ENCODE measurements at regions of chr15 and their contacts with region 1.

Region 1: DNA sequence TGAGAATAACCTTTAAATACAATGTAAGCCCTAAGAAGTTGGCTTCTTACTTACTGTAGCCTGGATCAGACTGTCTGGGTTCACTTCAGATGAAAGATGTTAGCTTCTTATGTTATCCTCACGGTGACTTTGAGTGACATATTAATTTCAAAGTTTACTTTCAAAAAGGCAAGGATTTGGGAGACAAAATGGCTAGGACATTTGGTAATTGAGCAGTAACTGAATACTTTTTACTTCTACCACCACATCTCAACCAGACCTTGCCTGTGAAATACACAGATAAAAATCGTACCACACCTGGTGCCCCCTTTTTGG is 36.0 kb upstream of the BNIP2 start:
- DNase-seq: no peak
- ATAC-seq: no peak
- H3K4me3 ChIP-seq: no peak overlapping the region
- H3K27ac ChIP-seq: no peak overlapping the region
- H3K4me1 ChIP-seq: peaks cover 8% of the 10 kb centered on the region; the same call in 2 of the 3 replicates
- CTCF ChIP-seq: no peak
- EP300 ChIP-seq: no peak
- POLR2A ChIP-seq: no peak
- RAD21 ChIP-seq: no peak

Region 2: GRCh38 chr15:59611276-59612260 is 113.6 kb before region 1 on chr15 and contains the start of gene GCNT3:
- CTCF ChIA-PET with region 1: no interaction called
- POLR2A ChIA-PET with region 1: no interaction called
- DNase-seq: peak; percentile 96 to 97
- ATAC-seq: peak; percentile 93 to 95
- H3K4me3 ChIP-seq: peak within 1 kb of the TSS; percentile 65
- H3K27ac ChIP-seq: peak within 1 kb of the TSS; percentile 95 to 96
- H3K4me1 ChIP-seq: peaks cover 39% of the 10 kb centered on the region
- CTCF ChIP-seq: no peak
- EP300 ChIP-seq: peak in 1 of 2 experiments; percentile 45; a peak in 1 of 5 replicates
- POLR2A ChIP-seq: peak; percentile 30
- RAD21 ChIP-seq: 0 out of 5 replicates have a peak, but pooled peaks of 1 of the 2 experiments have one; percentile 20
- polyA plus RNA-seq, gene GCNT3: 134 and 153 TPM in 2 replicates

Region 3: DNA sequence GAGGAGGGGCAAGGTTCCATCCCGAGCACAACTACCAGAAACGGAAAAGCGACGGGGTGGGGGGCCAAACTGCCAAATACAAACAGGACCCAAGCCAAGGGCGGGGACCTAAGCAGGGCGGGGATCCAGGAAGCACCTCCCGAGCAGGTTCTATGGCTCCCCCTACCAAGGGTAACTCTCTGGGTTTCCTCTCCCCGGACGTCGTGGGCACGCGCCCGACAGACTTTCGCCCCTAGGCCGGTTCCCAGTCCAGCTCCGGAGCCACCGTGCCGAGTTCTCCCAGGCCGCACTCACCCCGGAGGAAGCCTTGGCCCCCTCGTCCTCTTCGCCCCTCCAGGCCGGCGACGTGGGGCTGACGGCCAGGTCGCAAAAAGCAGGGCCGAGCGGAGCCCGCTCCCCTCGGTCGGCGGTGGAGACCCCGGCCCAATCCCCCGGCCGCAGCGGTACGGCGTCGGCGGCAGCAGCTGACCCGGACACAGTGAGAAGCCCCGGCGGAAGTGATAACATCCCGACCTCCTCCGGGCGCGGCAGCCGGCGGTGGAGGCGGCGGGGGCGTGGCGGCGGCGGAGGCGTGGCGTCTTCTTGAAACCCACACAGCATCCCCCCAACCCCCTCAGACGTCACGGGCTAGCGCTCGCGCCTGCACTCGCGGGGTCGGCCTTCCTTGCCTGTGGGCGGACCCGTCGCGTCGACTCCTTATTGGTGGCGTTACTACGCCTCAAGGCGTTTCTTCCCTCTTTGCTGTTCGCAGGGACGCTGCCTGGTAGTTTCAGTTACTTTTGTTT is 36.1 kb before region 1 on chr15 and contains the start of gene BNIP2:
- CTCF ChIA-PET with region 1: interaction called, 45 read pairs
- POLR2A ChIA-PET with region 1: no interaction called
- DNase-seq: peak; percentile 98 to 100
- ATAC-seq: peak; percentile 95 to 98
- H3K4me3 ChIP-seq: peak within 1 kb of the TSS; percentile 80
- H3K27ac ChIP-seq: peak within 1 kb of the TSS; percentile 94 to 97
- H3K4me1 ChIP-seq: peaks cover 29% of the 10 kb centered on the region
- CTCF ChIP-seq: no peak
- EP300 ChIP-seq: 0 out of 5 replicates have a peak, but pooled peaks of 1 of the 2 experiments have one; percentile 15
- POLR2A ChIP-seq: peak; percentile 56
- RAD21 ChIP-seq: no peak
- polyA plus RNA-seq, gene BNIP2: 93.6 and 146 TPM in 2 replicates

Region 4: DNA sequence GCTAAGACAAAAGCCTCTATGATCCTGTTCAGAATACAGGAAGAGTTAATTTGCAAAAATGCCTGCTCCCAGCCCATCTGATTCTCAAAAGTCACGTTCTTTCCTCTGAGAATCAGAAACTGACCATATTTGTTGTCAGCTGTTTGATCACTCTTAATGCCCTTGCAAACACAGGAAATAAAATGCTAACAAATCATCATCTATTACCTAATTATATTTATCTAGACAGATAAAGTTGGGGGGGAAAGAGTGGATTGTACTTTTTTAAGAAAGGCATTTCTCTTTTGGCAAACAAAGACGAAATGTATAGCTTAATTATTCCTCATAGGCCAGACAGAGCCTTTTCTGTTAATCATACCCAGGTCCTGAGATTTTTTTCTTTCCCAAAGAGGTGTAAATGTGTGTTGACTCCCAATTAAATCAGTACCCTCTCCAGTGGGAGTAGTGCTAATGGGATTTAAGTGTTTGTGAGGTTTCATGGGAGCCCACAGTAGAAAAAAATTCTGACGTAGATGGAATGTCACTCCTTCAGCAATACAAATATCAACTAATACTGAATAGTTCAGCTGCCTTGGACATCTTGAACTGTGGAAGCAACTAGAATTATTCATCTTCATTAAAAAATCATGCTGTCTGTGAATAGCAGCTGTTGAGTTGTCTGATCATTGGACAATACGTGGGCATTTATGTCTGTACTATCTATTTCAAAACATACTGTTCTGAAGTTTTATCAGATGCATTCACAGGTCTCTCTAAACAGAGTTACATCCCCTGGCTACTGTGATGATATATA is 13.5 kb before region 1 on chr15:
- CTCF ChIA-PET with region 1: interaction called, 44 read pairs
- POLR2A ChIA-PET with region 1: no interaction called
- DNase-seq: no peak
- ATAC-seq: peak; percentile 34 to 55; a peak in 1 of 6 replicates
- H3K4me3 ChIP-seq: no peak overlapping the region
- H3K27ac ChIP-seq: no peak overlapping the region
- H3K4me1 ChIP-seq: no peaks in the 10 kb centered on the region
- CTCF ChIP-seq: no peak
- EP300 ChIP-seq: no peak
- POLR2A ChIP-seq: no peak
- RAD21 ChIP-seq: no peak

Region 5: DNA sequence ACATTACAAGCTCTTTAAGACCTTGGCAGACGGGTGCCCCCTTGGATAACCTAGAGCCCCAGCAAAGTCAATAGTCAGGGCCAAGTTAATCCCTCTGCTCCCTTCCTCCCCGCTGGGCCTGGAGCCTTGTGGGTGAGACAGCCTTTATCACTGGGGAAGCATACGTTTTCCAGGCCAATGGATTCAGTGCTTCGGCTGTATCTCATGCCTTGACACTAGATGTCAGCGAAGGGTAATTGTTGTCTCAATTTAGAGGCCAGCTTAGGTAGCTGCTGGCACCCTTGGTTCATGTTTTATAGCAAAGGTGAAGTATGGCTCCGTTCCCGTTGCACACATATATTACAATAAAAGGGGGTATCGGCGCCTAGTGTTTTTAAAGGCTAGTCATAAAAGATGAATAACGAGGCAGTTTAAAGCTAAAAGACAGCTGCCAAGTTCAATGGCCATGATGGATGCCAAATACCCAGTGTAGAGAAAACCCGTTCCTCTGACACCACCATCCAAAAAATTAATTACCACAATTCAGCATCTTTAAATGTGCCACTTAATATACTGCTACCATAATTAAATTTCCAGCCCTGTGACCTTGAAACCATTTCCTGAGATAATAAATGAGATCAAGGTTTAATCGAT is 16.3 kb after region 1 on chr15:
- CTCF ChIA-PET with region 1: interaction called, 52 read pairs
- POLR2A ChIA-PET with region 1: no interaction called
- DNase-seq: peak in 1 of 2 experiments; percentile 40
- ATAC-seq: peak; percentile 68 to 88
- H3K4me3 ChIP-seq: no peak overlapping the region
- H3K27ac ChIP-seq: no peak overlapping the region
- H3K4me1 ChIP-seq: no peaks in the 10 kb centered on the region
- CTCF ChIP-seq: peak; percentile 30; the same call in 1 of the 3 replicates
- EP300 ChIP-seq: no peak
- POLR2A ChIP-seq: no peak
- RAD21 ChIP-seq: peak; percentile 40 to 62; a peak in 4 of 5 replicates

Region 6: DNA sequence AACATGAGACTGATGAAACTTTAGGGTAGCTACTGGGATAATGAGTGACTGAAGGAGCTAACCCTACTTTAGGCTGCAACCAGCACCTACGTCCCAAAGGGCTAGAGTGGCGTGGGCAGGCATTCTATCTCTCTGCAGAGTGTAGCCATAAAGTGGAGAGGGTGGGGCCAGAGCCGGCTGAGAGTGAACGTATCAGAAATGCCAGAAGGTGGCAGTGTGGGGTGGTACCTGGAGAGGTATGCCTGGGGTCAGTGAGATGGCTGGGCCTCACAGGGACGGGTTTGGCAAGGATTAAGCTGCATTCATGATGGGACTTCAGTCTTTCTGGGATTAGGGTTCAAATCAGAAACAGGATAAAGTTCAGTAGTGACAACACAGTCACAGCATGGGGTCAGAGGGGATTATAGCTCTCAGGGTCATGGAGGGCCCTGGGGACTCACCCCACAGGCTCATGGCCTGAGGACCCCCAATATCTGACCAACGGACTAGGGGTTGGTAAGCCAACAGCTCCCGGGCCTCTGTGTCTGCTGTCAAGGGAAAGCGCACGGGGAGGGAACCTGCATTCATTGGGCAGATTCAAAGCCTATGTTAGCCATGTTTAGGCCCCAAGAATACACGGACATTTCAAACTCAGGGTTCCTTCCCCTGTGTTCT is 192.5 kb after region 1 on chr15:
- CTCF ChIA-PET with region 1: interaction called, 16 read pairs
- POLR2A ChIA-PET with region 1: no interaction called
- DNase-seq: peak; percentile 61 to 73
- ATAC-seq: peak; percentile 94 to 99
- H3K4me3 ChIP-seq: no peak overlapping the region
- H3K27ac ChIP-seq: no peak overlapping the region
- H3K4me1 ChIP-seq: no peaks in the 10 kb centered on the region
- CTCF ChIP-seq: peak; percentile 61
- EP300 ChIP-seq: no peak
- POLR2A ChIP-seq: no peak
- RAD21 ChIP-seq: peak; percentile 64 to 78

Region 7: GRCh38 chr15:60128000-60128376 is 402.9 kb after region 1 on chr15:
- CTCF ChIA-PET with region 1: interaction called, 35 read pairs
- POLR2A ChIA-PET with region 1: no interaction called
- DNase-seq: no peak
- ATAC-seq: peak; percentile 41 to 45; a peak in 4 of 6 replicates
- H3K4me3 ChIP-seq: peak overlapping the region; percentile 50
- H3K27ac ChIP-seq: peak overlapping the region; percentile 48 to 72
- H3K4me1 ChIP-seq: no peaks in the 10 kb centered on the region
- CTCF ChIP-seq: no peak
- EP300 ChIP-seq: no peak
- POLR2A ChIP-seq: no peak
- RAD21 ChIP-seq: no peak

Region 8: GRCh38 chr15:60315878-60316277 is 590.7 kb after region 1 on chr15:
- CTCF ChIA-PET with region 1: interaction called, 148 read pairs
- POLR2A ChIA-PET with region 1: no interaction called
- DNase-seq: no peak
- ATAC-seq: no peak
- H3K4me3 ChIP-seq: no peak overlapping the region
- H3K27ac ChIP-seq: no peak overlapping the region
- H3K4me1 ChIP-seq: no peaks in the 10 kb centered on the region
- CTCF ChIP-seq: no peak
- EP300 ChIP-seq: no peak
- POLR2A ChIP-seq: no peak
- RAD21 ChIP-seq: no peak

Measured in A549 (cell line).